ENCODE measurements at regions of chr7 and their contacts with region 1.

Region 1: GRCh38 chr7:154804449-154804848 is 198.5 kb downstream of the PAXIP1 start:
- DNase-seq: no peak
- H3K4me3 ChIP-seq: no peak overlapping the region
- H3K27ac ChIP-seq: no peak overlapping the region
- H3K4me1 ChIP-seq: no peaks in the 10 kb centered on the region
- H3K27me3 ChIP-seq: no peaks in the 10 kb centered on the region
- CTCF ChIP-seq: no peak
- POLR2A ChIP-seq: no peak

Region 2: DNA sequence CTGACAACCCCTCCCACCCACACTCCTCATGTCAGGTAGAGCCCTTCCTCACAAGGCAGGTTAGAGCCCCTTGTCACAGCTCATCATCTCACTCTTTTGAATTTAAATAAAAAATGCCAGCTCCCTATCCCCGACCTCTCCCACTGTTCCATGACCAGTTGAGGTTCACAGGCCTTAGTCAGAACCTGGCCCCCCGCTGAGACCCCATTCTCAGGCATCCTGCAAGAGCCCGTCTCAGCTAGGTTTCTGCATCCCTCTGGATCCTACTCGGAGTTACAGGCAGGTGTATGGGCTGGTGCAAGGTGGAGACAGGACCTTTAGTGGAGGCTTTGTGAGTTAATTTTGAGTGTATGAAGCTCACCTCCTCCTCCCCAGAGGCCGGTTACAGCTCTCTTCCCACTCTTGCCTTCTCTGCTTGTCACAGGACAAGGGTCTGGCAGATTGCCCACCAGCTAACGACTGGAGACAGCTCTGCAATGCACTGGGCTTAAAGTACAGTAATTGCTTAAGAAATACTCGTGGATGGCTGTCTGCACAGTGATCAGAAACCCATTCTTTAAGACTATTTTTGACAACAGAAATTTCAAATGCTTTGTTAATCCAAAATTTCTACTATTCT is 1147.2 kb before region 1 on chr7:
- intact Hi-C with region 1: no loop called
- DNase-seq: no peak
- H3K4me3 ChIP-seq: no peak overlapping the region
- H3K27ac ChIP-seq: no peak overlapping the region
- H3K4me1 ChIP-seq: no peaks in the 10 kb centered on the region
- H3K27me3 ChIP-seq: no peaks in the 10 kb centered on the region
- CTCF ChIP-seq: no peak
- POLR2A ChIP-seq: no peak

Region 3: GRCh38 chr7:154832557-154833138 is 28.2 kb after region 1 on chr7:
- intact Hi-C with region 1: no loop called
- DNase-seq: no peak
- H3K4me3 ChIP-seq: no peak overlapping the region
- H3K27ac ChIP-seq: no peak overlapping the region
- H3K4me1 ChIP-seq: no peaks in the 10 kb centered on the region
- H3K27me3 ChIP-seq: no peaks in the 10 kb centered on the region
- CTCF ChIP-seq: no peak
- POLR2A ChIP-seq: no peak

Region 4: DNA sequence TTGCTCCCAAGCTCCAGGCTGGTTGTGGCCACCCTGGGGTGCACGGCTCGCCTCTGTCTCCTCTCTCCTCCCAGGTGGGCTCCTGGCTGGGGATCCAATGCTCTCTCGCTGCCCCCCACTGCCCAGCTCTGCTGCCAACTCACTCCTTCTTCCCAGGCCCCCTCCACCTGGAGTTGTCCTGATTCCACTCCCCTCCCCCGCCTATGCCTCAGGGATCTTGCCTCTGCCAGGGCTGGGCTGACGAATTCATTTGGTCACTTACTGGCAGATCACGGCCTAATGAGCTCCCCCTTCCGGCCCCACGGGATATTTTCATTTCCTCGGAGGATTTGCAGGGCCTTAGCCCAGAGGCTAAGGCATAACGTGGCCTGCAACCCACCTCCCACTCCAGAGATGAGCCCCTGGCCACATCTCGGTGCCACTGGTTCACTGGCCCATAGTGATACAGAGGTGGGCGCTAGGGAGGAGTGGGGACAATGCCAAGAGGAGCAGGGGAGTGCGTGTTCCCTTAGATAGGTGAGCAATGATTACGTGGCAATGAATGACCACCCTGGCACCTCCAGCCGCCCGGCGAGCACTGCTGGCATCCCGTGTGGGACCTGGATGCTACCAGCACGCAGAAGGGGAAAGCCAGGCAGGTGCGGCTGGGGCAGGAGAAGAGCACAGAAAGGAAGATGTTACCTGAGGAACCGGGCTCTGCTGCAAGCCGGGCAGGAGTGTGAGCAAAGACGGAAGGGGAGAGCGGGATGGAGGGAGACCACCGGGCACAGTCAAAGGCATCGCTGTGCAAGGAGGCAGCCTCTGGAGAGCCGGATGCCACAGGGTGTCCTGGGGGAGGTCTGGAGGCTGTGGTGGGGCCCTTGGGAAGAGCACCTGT is 1352.5 kb after region 1 on chr7:
- intact Hi-C with region 1: loop called (anchors 5 kb)
- DNase-seq: no peak
- H3K4me3 ChIP-seq: no peak overlapping the region
- H3K27ac ChIP-seq: no peak overlapping the region
- H3K4me1 ChIP-seq: no peaks in the 10 kb centered on the region
- H3K27me3 ChIP-seq: no peaks in the 10 kb centered on the region
- CTCF ChIP-seq: peak in 1 of 3 donors; percentile 11
- POLR2A ChIP-seq: no peak